ENCODE measurements at regions of chr15 and their contacts with region 1.

Region 1: DNA sequence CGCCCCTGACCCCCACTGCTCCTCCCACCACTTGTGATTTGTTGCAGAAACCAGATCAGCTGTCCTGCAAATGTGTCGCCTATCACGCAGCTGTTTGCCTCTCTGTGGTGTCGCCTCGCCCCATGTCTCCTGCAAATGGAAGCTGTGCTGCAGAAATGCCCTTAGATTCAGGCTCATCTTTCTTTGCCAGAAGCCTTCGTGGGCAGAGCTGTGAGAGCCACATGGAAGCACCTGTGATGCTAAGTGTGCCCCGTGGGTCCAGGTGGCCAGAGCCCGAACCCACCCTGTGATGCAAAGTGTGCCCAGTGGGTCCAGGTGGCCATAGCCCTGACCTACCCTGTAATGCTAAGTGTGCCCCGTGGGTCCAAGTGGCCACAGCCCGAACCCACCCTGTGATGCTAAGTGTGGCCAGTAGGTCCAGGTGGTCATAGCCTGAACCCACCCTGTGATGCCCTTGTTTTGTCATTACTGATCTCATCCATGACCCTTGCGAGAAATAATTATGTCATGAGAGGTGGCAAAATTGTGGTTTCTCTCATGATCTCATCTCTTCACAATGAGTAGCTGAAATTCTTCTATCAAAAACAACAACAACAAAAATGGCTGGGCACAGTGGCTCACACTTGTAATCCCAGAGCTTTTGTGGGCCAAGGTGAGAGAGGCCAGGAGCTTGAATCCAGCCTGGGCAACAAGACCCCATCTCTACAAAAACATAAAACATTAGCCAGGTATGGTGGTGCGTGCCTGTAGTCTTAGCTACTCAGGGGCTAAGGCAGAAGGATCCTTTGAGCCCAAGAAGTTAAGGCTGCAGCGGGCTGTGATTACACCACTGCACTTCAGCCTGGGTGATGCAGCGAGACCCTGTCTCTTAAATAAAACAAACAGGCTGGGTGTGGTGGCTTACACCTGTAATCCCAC is 187.4 kb downstream of the GOLGA6L6 start:
- DNase-seq: peak in 1 of 3 donors; percentile 17
- H3K4me3 ChIP-seq: no peak overlapping the region
- H3K4me3 Mint-ChIP-seq: no peak overlapping the region
- H3K27ac ChIP-seq: no peak overlapping the region
- H3K27ac Mint-ChIP-seq: no peak overlapping the region
- H3K4me1 ChIP-seq: no peaks in the 10 kb centered on the region
- H3K4me1 Mint-ChIP-seq: peaks cover 2% of the 10 kb centered on the region
- H3K27me3 ChIP-seq: no peaks in the 10 kb centered on the region
- H3K27me3 Mint-ChIP-seq: peaks cover 0 to 3% (median 1%) of the 10 kb centered on the region in 3 donors
- CTCF ChIP-seq: no peak

Region 2: GRCh38 chr15:20367093-20367492 is 12.9 kb after region 1 on chr15:
- intact Hi-C with region 1: loop called in 1 of 2 experiments (anchors 2 kb)
- DNase-seq: no peak
- H3K4me3 ChIP-seq: no peak overlapping the region
- H3K4me3 Mint-ChIP-seq: no peak overlapping the region
- H3K27ac ChIP-seq: no peak overlapping the region
- H3K27ac Mint-ChIP-seq: no peak overlapping the region
- H3K4me1 ChIP-seq: no peaks in the 10 kb centered on the region
- H3K4me1 Mint-ChIP-seq: no peaks in the 10 kb centered on the region
- H3K27me3 ChIP-seq: no peaks in the 10 kb centered on the region
- H3K27me3 Mint-ChIP-seq: no peaks in the 10 kb centered on the region
- CTCF ChIP-seq: no peak

Measured in CD14-positive monocyte (primary cell).